ENCODE measurements at regions of chr2 and their contacts with region 1.

Region 1: DNA sequence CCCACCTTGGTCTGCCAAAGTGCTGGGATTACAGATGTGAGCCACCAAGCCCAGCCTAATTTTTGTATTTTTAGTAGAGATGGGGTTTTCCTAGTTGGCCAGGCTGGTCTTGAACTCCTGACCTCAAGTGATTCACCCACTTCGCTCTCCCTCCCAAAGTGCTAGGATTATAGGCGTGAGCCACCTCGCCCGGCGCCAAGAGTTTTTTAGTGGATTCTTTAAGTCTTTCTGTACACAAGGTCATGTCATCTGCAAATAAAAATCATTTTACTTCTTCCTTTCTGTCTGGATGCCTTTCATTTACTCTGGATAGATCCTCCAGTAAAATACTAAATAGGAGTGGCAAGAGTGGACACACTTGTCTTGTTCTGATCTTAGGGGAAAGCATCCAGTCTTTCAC is 61.7 kb downstream of the KCMF1 start:
- DNase-seq: peak; percentile 27
- ATAC-seq: no peak
- H3K4me3 ChIP-seq: no peak overlapping the region
- H3K27ac ChIP-seq: no peak overlapping the region
- H3K4me1 ChIP-seq: peaks cover 2% of the 10 kb centered on the region; the same call in 1 of the 2 replicates
- H3K27me3 ChIP-seq: no peaks in the 10 kb centered on the region
- CTCF ChIP-seq: no peak
- POLR2A ChIP-seq: no peak
- RAD21 ChIP-seq: no peak

Region 2: GRCh38 chr2:84946204-84947009 is 86.2 kb before region 1 on chr2:
- CTCF ChIA-PET with region 1: no interaction called
- POLR2A ChIA-PET with region 1: no interaction called
- dilution Hi-C with region 1: no loop called
- in situ Hi-C with region 1: no loop called
- intact Hi-C with region 1: no loop called
- DNase-seq: peak; percentile 91
- ATAC-seq: peak; percentile 85
- H3K4me3 ChIP-seq: no peak overlapping the region
- H3K27ac ChIP-seq: peak overlapping the region; percentile 60
- H3K4me1 ChIP-seq: peaks cover 4% of the 10 kb centered on the region; the same call in 1 of the 2 replicates
- H3K27me3 ChIP-seq: no peaks in the 10 kb centered on the region
- CTCF ChIP-seq: peak; percentile 12; the same call in 1 of the 2 replicates
- POLR2A ChIP-seq: peak; percentile 68; the same call in 1 of the 2 replicates
- RAD21 ChIP-seq: peak; percentile 21; the same call in 1 of the 2 replicates

Region 3: DNA sequence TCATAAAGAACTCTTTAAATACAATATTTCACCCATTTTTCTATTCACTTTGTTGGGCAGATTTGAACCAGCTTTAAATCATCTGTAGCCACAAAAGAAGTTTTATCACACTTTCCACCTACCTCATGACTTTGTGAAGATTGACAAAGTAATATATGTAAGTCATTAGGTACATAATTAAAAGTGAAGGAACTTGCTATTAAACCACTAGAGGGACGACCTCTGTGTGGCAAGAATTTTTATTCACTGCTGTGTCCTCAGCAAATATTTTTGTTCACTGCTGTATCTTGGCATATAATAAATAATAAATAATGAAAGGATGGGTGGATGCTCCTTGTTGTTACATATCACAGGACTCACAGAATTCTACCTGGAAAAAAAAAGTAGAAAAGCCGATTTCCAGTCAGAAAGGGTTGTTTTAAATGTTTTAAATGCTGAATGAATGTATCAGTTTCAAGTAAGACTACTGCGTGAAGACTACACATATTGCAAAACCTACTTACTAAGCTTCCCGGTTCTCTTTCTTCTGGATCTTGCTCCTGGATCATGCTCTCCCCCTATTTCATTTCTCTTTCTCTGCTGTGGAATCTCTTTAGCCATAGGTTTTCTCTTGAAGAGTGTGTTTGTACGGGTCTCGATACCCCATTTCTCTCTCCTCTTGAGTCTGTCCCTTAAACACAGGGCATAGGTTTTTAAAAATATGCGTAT is 16.8 kb before region 1 on chr2:
- CTCF ChIA-PET with region 1: interaction called, 5 read pairs
- POLR2A ChIA-PET with region 1: interaction called, 14 read pairs
- dilution Hi-C with region 1: no loop called
- in situ Hi-C with region 1: no loop called
- intact Hi-C with region 1: no loop called
- DNase-seq: no peak
- ATAC-seq: 0 out of 2 replicates have a peak, but pooled peaks have one; percentile 18
- H3K4me3 ChIP-seq: no peak overlapping the region
- H3K27ac ChIP-seq: 0 out of 2 replicates have a peak overlapping the region, but pooled peaks have one; percentile 5
- H3K4me1 ChIP-seq: peaks cover 24% of the 10 kb centered on the region
- H3K27me3 ChIP-seq: no peaks in the 10 kb centered on the region
- CTCF ChIP-seq: peak; percentile 23; the same call in 1 of the 2 replicates
- POLR2A ChIP-seq: no peak
- RAD21 ChIP-seq: no peak